Caco-2 (cell line): ENCODE measurements at regions of chr2 and their contacts with region 1.

Region 1: GRCh38 chr2:69716555-69717114 is 25.3 kb upstream of the ANXA4 start:
- DNase-seq: no peak
- H3K4me3 ChIP-seq: no peak overlapping the region
- H3K4me3 Mint-ChIP-seq: no peak overlapping the region
- H3K27ac Mint-ChIP-seq: no peak overlapping the region
- H3K4me1 ChIP-seq: no peaks in the 10 kb centered on the region
- H3K4me1 Mint-ChIP-seq: no peaks in the 10 kb centered on the region
- H3K27me3 ChIP-seq: no peaks in the 10 kb centered on the region
- H3K27me3 Mint-ChIP-seq: no peaks in the 10 kb centered on the region
- CTCF ChIP-seq: no peak

Region 2: GRCh38 chr2:69539549-69539908 is 177.1 kb before region 1 on chr2:
- CTCF ChIA-PET with region 1: interaction called, 12 read pairs
- POLR2A ChIA-PET with region 1: no interaction called
- intact Hi-C with region 1: no loop called
- DNase-seq: no peak
- H3K4me3 ChIP-seq: no peak overlapping the region
- H3K4me3 Mint-ChIP-seq: no peak overlapping the region
- H3K27ac Mint-ChIP-seq: peak overlapping the region; percentile 55
- H3K4me1 ChIP-seq: peaks cover 17% of the 10 kb centered on the region
- H3K4me1 Mint-ChIP-seq: peaks cover 13% of the 10 kb centered on the region
- H3K27me3 ChIP-seq: no peaks in the 10 kb centered on the region
- H3K27me3 Mint-ChIP-seq: no peaks in the 10 kb centered on the region
- CTCF ChIP-seq: no peak

Region 3: GRCh38 chr2:69559442-69560146 is 157.0 kb before region 1 on chr2:
- CTCF ChIA-PET with region 1: interaction called, 5 read pairs
- POLR2A ChIA-PET with region 1: interaction called, 3 read pairs
- intact Hi-C with region 1: loop called (anchors 1 kb)
- DNase-seq: peak in 1 of 2 experiments; percentile 65
- H3K4me3 ChIP-seq: no peak overlapping the region
- H3K4me3 Mint-ChIP-seq: no peak overlapping the region
- H3K27ac Mint-ChIP-seq: no peak overlapping the region
- H3K4me1 ChIP-seq: peaks cover 16% of the 10 kb centered on the region
- H3K4me1 Mint-ChIP-seq: peaks cover 33% of the 10 kb centered on the region
- H3K27me3 ChIP-seq: no peaks in the 10 kb centered on the region
- H3K27me3 Mint-ChIP-seq: no peaks in the 10 kb centered on the region
- CTCF ChIP-seq: peak; percentile 71 to 83